SK-N-SH (cell line): ENCODE measurements at regions of chr14 and their contacts with region 1.

Region 1: GRCh38 chr14:54805521-54806322 is 96.9 kb downstream of the GCH1 start:
- DNase-seq: peak; percentile 80
- H3K4me3 ChIP-seq: peak overlapping the region in 1 of 2 experiments; percentile 45; a peak in 1 of 4 replicates
- H3K27ac ChIP-seq: peak overlapping the region in 1 of 2 experiments; percentile 29; a peak in 1 of 4 replicates
- H3K4me1 ChIP-seq: peaks cover 0 to 57% of the 10 kb centered on the region in 2 experiments; a peak in 2 of 4 replicates
- H3K27me3 ChIP-seq: no peaks in the 10 kb centered on the region
- CTCF ChIP-seq: peak; percentile 90
- EP300 ChIP-seq: no peak
- RAD21 ChIP-seq: peak; percentile 85

Region 2: DNA sequence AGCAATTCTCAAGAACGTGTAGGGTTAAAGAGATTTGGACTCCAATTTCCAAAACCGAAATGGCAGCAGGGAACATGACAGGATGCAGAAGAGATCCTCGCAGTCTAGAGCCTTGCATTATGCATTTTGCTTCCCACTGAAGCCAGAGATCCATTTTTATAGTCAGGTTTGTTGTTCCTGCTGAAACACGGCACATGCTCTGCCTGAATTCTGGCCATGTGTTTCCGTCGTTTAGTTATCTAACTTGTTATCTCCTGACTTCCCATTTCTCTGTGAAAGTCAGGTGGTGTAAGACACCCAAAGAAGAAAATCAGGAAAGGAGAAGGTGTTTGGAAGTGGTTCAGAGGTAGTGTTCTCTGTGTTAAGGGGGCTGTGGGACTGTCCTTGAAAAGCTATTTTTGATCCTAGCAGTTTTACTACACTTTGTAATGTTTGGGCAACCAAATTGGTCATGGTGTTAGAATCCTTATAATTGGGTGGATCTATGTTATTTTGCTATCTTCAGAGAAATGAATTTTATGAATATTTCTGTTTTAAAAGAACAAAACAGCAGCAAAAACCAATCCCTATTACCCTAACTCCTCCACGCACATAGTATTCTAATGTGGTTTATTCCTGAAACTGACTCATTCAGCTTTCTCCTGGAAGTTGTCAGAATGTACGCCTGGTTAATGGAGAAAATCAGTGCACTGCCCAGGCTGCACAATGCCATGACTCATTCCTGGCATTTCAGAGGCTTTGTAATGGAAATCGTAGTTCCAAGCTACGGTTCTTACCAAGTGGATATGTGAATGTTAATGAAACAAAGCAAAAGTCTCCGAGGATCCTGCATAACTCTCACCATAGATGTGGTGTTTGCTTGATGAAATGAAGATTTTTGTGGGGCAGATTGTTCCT is 128.7 kb before region 1 on chr14:
- CTCF ChIA-PET with region 1: no interaction called
- POLR2A ChIA-PET with region 1: no interaction called
- DNase-seq: peak; percentile 38
- H3K4me3 ChIP-seq: peak overlapping the region; percentile 16 to 23; a peak in 3 of 4 replicates
- H3K27ac ChIP-seq: peak overlapping the region; percentile 83 to 90
- H3K4me1 ChIP-seq: peaks cover 19 to 55% of the 10 kb centered on the region in 2 experiments; a peak in 3 of 4 replicates
- H3K27me3 ChIP-seq: no peaks in the 10 kb centered on the region
- CTCF ChIP-seq: no peak
- EP300 ChIP-seq: peak; percentile 42 to 86
- RAD21 ChIP-seq: no peak

Region 3: GRCh38 chr14:54782751-54783679 is 22.7 kb before region 1 on chr14:
- CTCF ChIA-PET with region 1: interaction called, 13 read pairs
- POLR2A ChIA-PET with region 1: interaction called, 4 read pairs
- DNase-seq: no peak
- H3K4me3 ChIP-seq: no peak overlapping the region
- H3K27ac ChIP-seq: no peak overlapping the region; a peak in 1 of 4 replicates
- H3K4me1 ChIP-seq: peaks cover 26 to 42% of the 10 kb centered on the region in 2 experiments; a peak in 2 of 4 replicates
- H3K27me3 ChIP-seq: no peaks in the 10 kb centered on the region
- CTCF ChIP-seq: peak; percentile 21; the same call in 1 of the 2 replicates
- EP300 ChIP-seq: no peak
- RAD21 ChIP-seq: peak; percentile 25; the same call in 1 of the 2 replicates

Region 4: GRCh38 chr14:54792288-54792687 is 13.4 kb before region 1 on chr14:
- CTCF ChIA-PET with region 1: interaction called, 49 read pairs
- POLR2A ChIA-PET with region 1: interaction called, 3 read pairs
- DNase-seq: no peak
- H3K4me3 ChIP-seq: no peak overlapping the region
- H3K27ac ChIP-seq: no peak overlapping the region
- H3K4me1 ChIP-seq: peaks cover 3 to 9% of the 10 kb centered on the region in 2 experiments; a peak in 3 of 4 replicates
- H3K27me3 ChIP-seq: no peaks in the 10 kb centered on the region
- CTCF ChIP-seq: no peak
- EP300 ChIP-seq: no peak
- RAD21 ChIP-seq: no peak

Region 5: DNA sequence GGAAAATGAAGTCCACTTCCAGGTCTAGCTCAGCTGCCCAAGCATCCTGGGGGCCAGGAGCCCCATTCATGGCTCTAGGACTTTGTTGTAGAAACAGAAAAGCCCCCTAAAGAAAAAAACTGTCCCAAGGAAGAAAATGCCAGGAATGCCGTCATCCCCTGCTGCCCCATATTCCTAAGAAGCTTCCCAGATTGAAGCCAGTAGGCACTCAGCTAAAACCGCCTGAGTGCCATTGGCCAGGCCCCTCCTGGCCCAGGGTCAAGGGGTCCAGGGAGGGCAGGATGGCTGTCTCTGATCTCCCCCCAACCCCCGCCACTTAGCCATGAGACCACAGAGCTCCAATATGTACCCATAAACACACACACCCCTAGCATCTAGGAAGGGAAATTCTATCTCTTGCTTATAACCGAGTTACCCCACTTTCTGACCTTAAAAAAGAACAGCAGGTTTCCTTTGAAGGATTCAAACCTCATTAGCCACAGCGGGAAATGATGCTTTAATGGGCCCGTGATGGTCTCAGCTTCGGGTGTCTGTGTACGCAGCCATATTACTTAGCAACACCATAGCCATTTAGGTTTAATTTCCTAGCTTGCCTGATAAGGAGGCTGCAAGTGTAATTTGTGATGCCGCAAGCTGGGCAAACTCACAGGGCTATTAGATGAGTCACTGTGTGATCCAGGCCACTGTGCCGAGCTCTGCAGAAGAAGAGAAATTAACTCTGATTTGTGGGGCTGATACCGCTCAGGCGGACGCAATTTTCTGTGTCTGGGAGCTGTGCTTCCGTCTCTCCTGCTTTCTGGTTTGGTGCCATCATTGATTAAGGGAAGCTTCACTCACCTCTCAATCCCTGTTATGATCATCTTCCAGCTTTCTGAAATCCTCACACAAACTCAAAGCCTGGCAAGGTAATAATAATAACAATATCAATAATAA is 12.7 kb after region 1 on chr14:
- CTCF ChIA-PET with region 1: interaction called, 68 read pairs
- POLR2A ChIA-PET with region 1: interaction called, 63 read pairs
- DNase-seq: peak; percentile 76
- H3K4me3 ChIP-seq: peak overlapping the region in 1 of 2 experiments; percentile 12; a peak in 3 of 4 replicates
- H3K27ac ChIP-seq: peak overlapping the region; percentile 67 to 100
- H3K4me1 ChIP-seq: peaks cover 5 to 56% of the 10 kb centered on the region in 2 experiments; a peak in 3 of 4 replicates
- H3K27me3 ChIP-seq: no peaks in the 10 kb centered on the region
- CTCF ChIP-seq: no peak
- EP300 ChIP-seq: peak; percentile 63 to 98; a peak in 3 of 4 replicates
- RAD21 ChIP-seq: peak; percentile 28

Region 6: DNA sequence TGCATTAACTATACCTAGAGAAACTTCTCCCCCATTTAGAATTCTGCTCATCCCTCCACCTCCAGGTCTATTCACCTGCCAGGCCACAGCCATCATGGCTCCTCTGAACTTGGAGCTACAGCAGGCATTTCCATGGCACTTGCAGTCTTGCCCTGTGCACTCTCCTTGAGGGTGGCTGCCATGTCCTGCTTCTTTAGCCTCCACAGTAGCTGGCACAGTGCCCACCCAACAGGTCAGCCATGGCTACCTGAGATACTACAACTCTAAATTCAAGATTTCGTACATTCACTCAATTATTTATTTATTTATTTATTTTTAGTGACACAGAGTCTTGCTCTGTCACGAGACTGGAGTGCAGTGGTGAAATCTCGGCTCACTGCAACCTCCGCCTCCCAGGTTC is 50.4 kb after region 1 on chr14:
- CTCF ChIA-PET with region 1: no interaction called
- POLR2A ChIA-PET with region 1: no interaction called
- DNase-seq: no peak
- H3K4me3 ChIP-seq: no peak overlapping the region
- H3K27ac ChIP-seq: no peak overlapping the region
- H3K4me1 ChIP-seq: peaks cover 4 to 10% of the 10 kb centered on the region in 2 experiments; a peak in 3 of 4 replicates
- H3K27me3 ChIP-seq: no peaks in the 10 kb centered on the region
- CTCF ChIP-seq: no peak
- EP300 ChIP-seq: no peak
- RAD21 ChIP-seq: no peak

Region 7: GRCh38 chr14:54866588-54866987 is 60.9 kb after region 1 on chr14:
- CTCF ChIA-PET with region 1: interaction called, 8 read pairs
- POLR2A ChIA-PET with region 1: interaction called, 12 read pairs
- DNase-seq: no peak
- H3K4me3 ChIP-seq: no peak overlapping the region
- H3K27ac ChIP-seq: peak overlapping the region in 1 of 2 experiments; percentile 77; a peak in 3 of 4 replicates
- H3K4me1 ChIP-seq: peaks cover 0 to 43% of the 10 kb centered on the region in 2 experiments; a peak in 2 of 4 replicates
- H3K27me3 ChIP-seq: no peaks in the 10 kb centered on the region
- CTCF ChIP-seq: no peak
- EP300 ChIP-seq: no peak
- RAD21 ChIP-seq: no peak

Region 8: DNA sequence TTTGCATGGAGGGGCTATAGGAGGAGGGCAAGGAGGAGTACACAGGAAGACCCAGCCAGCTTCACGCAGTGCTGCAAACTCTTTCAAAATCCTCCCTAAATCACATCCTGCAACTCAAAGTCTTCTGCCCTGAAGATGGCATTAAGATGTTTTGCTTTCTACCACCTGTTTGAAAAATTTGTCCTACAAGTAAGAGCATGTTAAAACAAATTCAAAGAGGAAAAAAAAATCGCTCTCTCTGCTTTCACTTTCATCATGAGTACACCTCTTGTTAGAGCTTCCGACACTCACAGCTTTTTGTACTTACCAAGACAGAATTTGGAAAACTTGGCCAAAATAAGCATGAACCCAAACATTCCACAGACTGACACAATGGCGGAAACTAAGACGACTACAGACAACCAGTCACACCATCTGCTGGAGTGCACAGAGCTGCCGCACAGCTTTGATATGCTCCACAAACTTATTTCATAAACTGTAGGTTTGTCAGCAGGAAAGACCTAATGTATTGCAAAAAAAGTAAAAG is 75.6 kb after region 1 on chr14:
- CTCF ChIA-PET with region 1: interaction called, 22 read pairs
- POLR2A ChIA-PET with region 1: interaction called, 8 read pairs
- DNase-seq: no peak
- H3K4me3 ChIP-seq: peak overlapping the region in 1 of 2 experiments; percentile 16; a peak in 1 of 4 replicates
- H3K27ac ChIP-seq: peak overlapping the region; percentile 23 to 94; a peak in 3 of 4 replicates
- H3K4me1 ChIP-seq: peaks cover 0 to 49% of the 10 kb centered on the region in 2 experiments; a peak in 2 of 4 replicates
- H3K27me3 ChIP-seq: no peaks in the 10 kb centered on the region
- CTCF ChIP-seq: no peak
- EP300 ChIP-seq: no peak
- RAD21 ChIP-seq: no peak

Region 9: GRCh38 chr14:54902521-54903420 is 97.0 kb after region 1 on chr14 and contains the start of gene GCH1:
- CTCF ChIA-PET with region 1: interaction called, 13 read pairs
- POLR2A ChIA-PET with region 1: interaction called, 16 read pairs
- DNase-seq: peak; percentile 96
- H3K4me3 ChIP-seq: peak within 1 kb of the TSS; percentile 80 to 82
- H3K27ac ChIP-seq: peak within 1 kb of the TSS; percentile 11 to 83; a peak in 3 of 4 replicates
- H3K4me1 ChIP-seq: peaks cover 4 to 5% of the 10 kb centered on the region in 2 experiments; a peak in 1 of 4 replicates
- H3K27me3 ChIP-seq: no peaks in the 10 kb centered on the region
- CTCF ChIP-seq: peak; percentile 66
- EP300 ChIP-seq: no peak
- RAD21 ChIP-seq: peak; percentile 41
- polyA plus RNA-seq, gene GCH1: 2.2 and 4.7 TPM in 2 replicates

Region 10: DNA sequence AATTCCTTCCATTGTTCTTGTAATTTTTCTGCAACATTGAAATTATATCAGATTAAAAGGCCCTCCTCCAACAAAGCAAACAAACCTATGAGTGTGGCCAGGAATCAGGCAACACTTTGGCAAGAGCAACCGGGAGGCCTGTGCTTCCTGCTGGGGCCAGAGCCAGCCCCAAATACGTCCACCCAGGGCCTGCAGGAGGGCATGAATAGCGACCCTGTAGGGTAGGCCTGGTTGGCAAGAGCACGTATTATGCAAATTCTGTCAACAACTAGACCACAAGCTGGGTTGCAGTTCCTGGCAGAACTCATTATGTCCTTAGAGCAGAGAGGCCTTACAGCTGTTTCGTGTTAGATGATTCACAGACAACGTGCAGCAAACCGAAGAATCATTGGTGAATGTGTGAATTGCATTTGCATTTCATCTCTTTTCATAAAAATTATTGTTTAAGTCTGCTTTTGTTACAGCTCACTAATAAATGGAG is 296.5 kb after region 1 on chr14:
- CTCF ChIA-PET with region 1: no interaction called
- POLR2A ChIA-PET with region 1: no interaction called
- DNase-seq: peak; percentile 69
- H3K4me3 ChIP-seq: no peak overlapping the region
- H3K27ac ChIP-seq: peak overlapping the region; percentile 87 to 89
- H3K4me1 ChIP-seq: peaks cover 16 to 22% of the 10 kb centered on the region in 2 experiments
- H3K27me3 ChIP-seq: no peaks in the 10 kb centered on the region
- CTCF ChIP-seq: no peak
- EP300 ChIP-seq: peak; percentile 66 to 79; a peak in 3 of 4 replicates
- RAD21 ChIP-seq: peak; percentile 19; the same call in 1 of the 2 replicates